Calu3 (cell line): ENCODE measurements at regions of chr11 and their contacts with region 1.

Region 1: GRCh38 chr11:25953015-25953414 is 378.9 kb upstream of the ANO3 start:
- DNase-seq: no peak
- H3K4me3 Mint-ChIP-seq: no peak overlapping the region
- H3K27ac Mint-ChIP-seq: no peak overlapping the region
- H3K4me1 Mint-ChIP-seq: peaks cover 14% of the 10 kb centered on the region
- H3K27me3 Mint-ChIP-seq: no peaks in the 10 kb centered on the region
- CTCF ChIP-seq: no peak

Region 2: DNA sequence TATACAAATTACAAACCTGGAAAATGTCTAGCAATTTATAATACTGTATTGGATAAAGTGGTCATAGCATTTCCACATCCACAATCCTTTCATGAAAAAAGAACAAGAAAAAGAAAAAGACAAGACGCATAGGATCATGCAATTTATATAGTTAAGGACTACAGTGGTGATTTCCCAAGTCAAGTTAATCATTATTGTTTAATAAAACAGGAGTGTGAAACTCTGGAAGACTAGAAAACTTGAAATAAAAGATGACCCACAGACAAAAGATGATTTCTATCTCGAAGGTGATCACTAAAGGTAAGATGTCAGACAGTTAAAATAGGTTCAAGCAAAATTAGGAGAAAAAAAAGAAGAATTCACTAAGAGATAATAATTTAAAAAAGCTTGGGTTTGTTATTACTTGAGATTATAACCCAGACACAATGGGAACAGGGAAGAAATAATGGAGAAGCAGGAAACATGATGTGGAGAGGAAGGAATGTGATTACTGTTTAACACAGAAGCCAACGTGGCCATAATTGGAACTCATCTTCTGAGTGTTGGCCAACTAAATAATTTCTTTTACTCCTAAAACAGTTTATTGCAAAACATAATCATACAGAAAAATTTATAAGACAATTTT is 62.3 kb before region 1 on chr11:
- CTCF ChIA-PET with region 1: no interaction called
- intact Hi-C with region 1: loop called (anchors 10 kb)
- DNase-seq: no peak
- H3K4me3 Mint-ChIP-seq: no peak overlapping the region
- H3K27ac Mint-ChIP-seq: peak overlapping the region; percentile 60
- H3K4me1 Mint-ChIP-seq: peaks cover 18% of the 10 kb centered on the region
- H3K27me3 Mint-ChIP-seq: no peaks in the 10 kb centered on the region
- CTCF ChIP-seq: no peak